Naive thymus-derived CD4-positive, alpha-beta T cell (primary cell): ENCODE measurements at regions of chr18 and their contacts with region 1.

Region 1: DNA sequence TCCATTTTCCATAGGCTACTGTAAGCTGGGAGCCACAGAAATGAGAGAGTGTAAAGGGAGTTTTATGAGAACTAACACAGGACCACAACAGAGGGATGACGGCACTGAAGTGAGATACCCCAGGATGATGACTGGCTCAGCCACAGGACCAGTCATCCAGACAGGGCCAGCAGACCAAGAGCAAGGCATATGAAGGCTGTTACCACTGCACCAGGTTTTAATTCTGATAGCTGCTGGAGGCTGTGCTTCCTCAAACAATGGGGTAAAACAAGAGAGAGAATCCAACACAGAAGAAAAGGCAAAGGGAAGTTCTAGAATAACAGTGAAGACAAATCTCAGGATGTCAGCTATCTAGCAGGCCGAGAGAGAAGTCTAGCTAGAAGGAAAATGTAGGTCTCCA is 94.9 kb downstream of the BCL2 start:
- DNase-seq: peak in 1 of 9 donors; percentile 49
- ATAC-seq: peak; percentile 76
- H3K4me3 ChIP-seq: no peak overlapping the region
- H3K4me3 Mint-ChIP-seq: peak overlapping the region in 8 of 10 donors; percentile 12 to 74 (median 53)
- H3K27ac ChIP-seq: peak overlapping the region; percentile 47
- H3K27ac Mint-ChIP-seq: peak overlapping the region; percentile 5 to 93 (median 84)
- H3K4me1 ChIP-seq: peaks cover 29 to 42% of the 10 kb centered on the region in 2 donors
- H3K4me1 Mint-ChIP-seq: peaks cover 68 to 94% (median 88%) of the 10 kb centered on the region in 7 donors
- H3K27me3 ChIP-seq: no peaks in the 10 kb centered on the region
- H3K27me3 Mint-ChIP-seq: no peaks in the 10 kb centered on the region

Region 2: DNA sequence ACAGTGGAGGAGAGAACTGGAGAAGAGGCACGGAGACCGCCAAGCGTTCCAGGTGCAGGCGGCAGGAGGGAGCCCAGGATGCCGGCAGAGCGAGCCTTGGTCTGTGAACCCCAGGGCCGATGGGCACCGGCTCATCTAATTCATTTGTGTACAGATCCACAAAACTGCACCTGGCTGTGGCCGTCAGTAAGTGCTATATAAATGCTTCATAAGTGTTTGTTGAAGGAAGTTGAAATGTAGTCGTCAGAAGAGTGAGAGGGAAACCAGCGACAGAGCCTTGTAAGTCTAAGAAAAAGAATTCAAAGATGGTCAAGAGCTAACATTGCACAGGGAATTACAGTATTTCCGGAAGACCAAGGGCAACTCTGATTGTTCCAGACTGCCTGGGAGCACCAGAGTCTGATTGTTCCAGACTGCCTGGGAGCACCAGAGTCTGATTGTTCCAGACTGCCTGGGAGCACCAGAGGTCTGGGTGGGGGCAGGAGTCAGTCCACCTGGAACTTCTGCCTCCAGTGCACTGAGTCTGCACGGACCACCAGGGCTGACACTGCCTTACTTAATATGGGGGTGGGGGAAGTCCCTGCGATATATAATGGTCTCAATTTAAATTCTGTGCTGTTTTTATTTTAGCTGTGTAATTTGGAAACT is 17.4 kb before region 1 on chr18:
- CTCF ChIA-PET with region 1: interaction called, 3 read pairs
- POLR2A ChIA-PET with region 1: interaction called, 59 read pairs
- intact Hi-C with region 1: no loop called
- DNase-seq: no peak
- ATAC-seq: peak; percentile 46
- H3K4me3 ChIP-seq: peak overlapping the region; percentile 40
- H3K4me3 Mint-ChIP-seq: peak overlapping the region; percentile 72 to 94 (median 81)
- H3K27ac ChIP-seq: peak overlapping the region; percentile 63
- H3K27ac Mint-ChIP-seq: peak overlapping the region; percentile 77 to 96 (median 92)
- H3K4me1 ChIP-seq: peaks cover 58 to 97% of the 10 kb centered on the region in 2 donors
- H3K4me1 Mint-ChIP-seq: peaks cover 77 to 100% (median 95%) of the 10 kb centered on the region in 7 donors
- H3K27me3 ChIP-seq: no peaks in the 10 kb centered on the region
- H3K27me3 Mint-ChIP-seq: no peaks in the 10 kb centered on the region